ENCODE measurements at regions of chr12 and their contacts with region 1.

Region 1: GRCh38 chr12:57151741-57152630 is 4.6 kb upstream of the LRP1-AS start:
- DNase-seq: no peak
- H3K4me3 ChIP-seq: no peak overlapping the region
- H3K27me3 ChIP-seq: no peaks in the 10 kb centered on the region
- CTCF ChIP-seq: no peak

Region 2: GRCh38 chr12:57129889-57130288 is 22.1 kb before region 1 on chr12:
- CTCF ChIA-PET with region 1: interaction called, 16 read pairs
- POLR2A ChIA-PET with region 1: interaction called, 13 read pairs
- DNase-seq: no peak
- H3K4me3 ChIP-seq: peak overlapping the region; percentile 96
- H3K27me3 ChIP-seq: no peaks in the 10 kb centered on the region
- CTCF ChIP-seq: no peak

Region 3: GRCh38 chr12:57175428-57176138 is 23.6 kb after region 1 on chr12:
- CTCF ChIA-PET with region 1: interaction called, 23 read pairs
- POLR2A ChIA-PET with region 1: no interaction called
- DNase-seq: no peak
- H3K4me3 ChIP-seq: no peak overlapping the region
- H3K27me3 ChIP-seq: no peaks in the 10 kb centered on the region
- CTCF ChIP-seq: peak; percentile 89

Measured in BJ (cell line).